Astrocyte of the cerebellum (primary cell): ENCODE measurements at regions of chr16 and their contacts with region 1.

Region 1: GRCh38 chr16:73629011-73629410 is 581.1 kb upstream of the ZFHX3 start:
- DNase-seq: no peak
- H3K4me3 ChIP-seq: no peak overlapping the region
- CTCF ChIP-seq: no peak

Region 2: DNA sequence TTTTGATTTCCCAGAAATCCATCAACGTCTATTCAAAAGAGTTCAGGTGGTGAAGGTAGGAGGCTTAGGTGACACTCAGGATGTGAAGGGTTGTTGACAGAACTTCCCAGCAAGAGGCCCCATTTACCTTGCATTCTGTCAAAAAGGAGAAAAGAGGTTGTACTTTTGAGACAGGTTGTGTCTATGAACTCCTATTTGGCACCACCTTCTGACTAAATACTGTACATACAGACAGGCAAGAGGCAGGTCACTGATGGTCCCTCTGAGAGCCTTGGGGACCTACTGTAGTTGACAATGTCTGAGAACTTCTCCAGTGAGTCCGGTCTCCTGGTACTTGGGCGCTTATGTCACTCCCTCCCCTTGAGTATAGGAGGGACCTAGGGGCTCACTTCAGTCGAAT is 101.8 kb before region 1 on chr16:
- in situ Hi-C with region 1: loop called (anchors 5 kb)
- DNase-seq: no peak
- H3K4me3 ChIP-seq: no peak overlapping the region
- CTCF ChIP-seq: no peak

Region 3: DNA sequence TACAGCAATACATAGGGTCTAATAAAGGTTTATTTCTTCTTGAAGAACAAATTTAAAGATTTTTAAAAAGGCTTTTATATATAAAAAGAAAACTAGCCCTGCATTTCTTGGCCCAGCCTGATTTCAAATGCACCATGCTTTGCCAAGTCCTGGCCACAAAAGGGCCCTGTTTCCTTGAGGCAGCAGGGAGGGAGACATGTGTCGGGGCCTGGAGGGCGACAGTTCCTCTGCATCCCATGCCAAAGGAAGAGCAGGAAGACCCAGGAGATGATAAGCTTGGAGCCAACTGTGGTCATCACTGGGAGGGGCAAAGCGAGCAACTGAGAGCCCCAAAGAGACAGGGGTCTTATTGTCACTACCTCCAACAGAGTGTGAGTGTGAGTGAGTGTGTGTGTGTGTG is 96.1 kb after region 1 on chr16:
- in situ Hi-C with region 1: no loop called
- DNase-seq: no peak
- H3K4me3 ChIP-seq: no peak overlapping the region
- CTCF ChIP-seq: no peak